ENCODE measurements at regions of chr14 and their contacts with region 1.

Region 1: GRCh38 chr14:58244556-58245387 is at the start of gene PSMA3:
- DNase-seq: peak; percentile 99
- total RNA-seq, gene PSMA3: 147 to 170 TPM

Region 2: GRCh38 chr14:58216544-58216943 is 28.2 kb before region 1 on chr14:
- intact Hi-C with region 1: no loop called
- DNase-seq: no peak

Region 3: GRCh38 chr14:58297762-58298476 is 53.1 kb after region 1 on chr14:
- intact Hi-C with region 1: loop called in 1 of 2 experiments (anchors 10 kb)
- DNase-seq: peak; percentile 99